GM10248 (cell line): ENCODE measurements at regions of chr12 and their contacts with region 1.

Region 1: GRCh38 chr12:51056244-51056643 is 8.1 kb downstream of the LETMD1 start:
- DNase-seq: no peak
- CTCF ChIP-seq: no peak

Region 2: DNA sequence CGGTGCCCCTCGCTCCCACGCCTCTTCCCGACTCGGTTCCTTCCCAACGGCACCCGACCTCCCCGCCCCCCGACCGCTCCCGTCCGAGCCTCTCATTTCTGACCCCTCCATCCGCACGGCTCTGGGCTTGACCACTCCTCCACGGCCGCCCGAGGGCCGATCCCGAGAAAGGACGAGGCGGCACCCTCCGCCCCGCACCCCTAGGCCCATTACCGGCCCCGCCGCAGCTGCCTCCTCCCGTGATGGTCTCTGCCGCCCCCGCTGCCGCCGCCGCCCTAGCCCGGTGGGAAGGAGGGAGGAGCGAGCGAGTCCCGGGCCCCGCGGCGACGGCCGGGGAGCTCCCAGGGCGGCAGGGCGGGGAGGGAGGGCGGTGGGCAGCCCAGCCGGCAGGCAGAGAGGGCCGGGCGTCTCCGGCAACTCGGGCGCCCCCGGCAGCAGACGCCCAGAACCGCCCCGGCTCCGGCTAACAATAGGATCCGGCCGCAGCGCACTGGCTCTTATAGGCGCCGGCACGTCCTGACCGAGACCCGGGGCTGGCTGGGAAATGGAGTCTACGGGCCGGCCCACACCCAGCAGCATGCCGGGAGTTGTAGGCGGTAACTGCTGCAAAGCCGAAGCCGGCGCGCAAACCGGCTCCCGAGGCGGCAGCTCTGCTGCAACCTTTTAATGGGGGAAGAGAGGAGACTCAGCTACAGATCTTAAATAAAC is 27.0 kb after region 1 on chr12 and contains the start of gene CSRNP2:
- CTCF ChIA-PET with region 1: interaction called, 3 read pairs
- POLR2A ChIA-PET with region 1: interaction called, 11 read pairs
- DNase-seq: peak; percentile 99
- CTCF ChIP-seq: no peak